CD4-positive, alpha-beta memory T cell (primary cell): ENCODE measurements at regions of chr2 and their contacts with region 1.

Region 1: GRCh38 chr2:240560480-240561326 is 546 bp downstream of the DUSP28 start:
- DNase-seq: peak; percentile 99 to 100 (median 99)
- H3K4me3 ChIP-seq: peak overlapping the region; percentile 54 to 90
- H3K4me3 Mint-ChIP-seq: peak overlapping the region; percentile 84 to 91 (median 88)
- H3K27ac ChIP-seq: peak overlapping the region; percentile 86
- H3K27ac Mint-ChIP-seq: peak overlapping the region; percentile 86 to 99 (median 94)
- H3K4me1 ChIP-seq: peaks cover 85% of the 10 kb centered on the region
- H3K4me1 Mint-ChIP-seq: peaks cover 47 to 84% (median 67%) of the 10 kb centered on the region in 4 donors
- H3K27me3 ChIP-seq: no peaks in the 10 kb centered on the region
- H3K27me3 Mint-ChIP-seq: no peaks in the 10 kb centered on the region

Region 2: GRCh38 chr2:240021488-240022104 is 539.1 kb before region 1 on chr2:
- CTCF ChIA-PET with region 1: no interaction called
- POLR2A ChIA-PET with region 1: no interaction called
- intact Hi-C with region 1: loop called (anchors 5 kb)
- DNase-seq: peak; percentile 42 to 73 (median 51)
- H3K4me3 ChIP-seq: no peak overlapping the region
- H3K4me3 Mint-ChIP-seq: no peak overlapping the region
- H3K27ac ChIP-seq: no peak overlapping the region
- H3K27ac Mint-ChIP-seq: peak overlapping the region in 2 of 7 donors; percentile 41 to 65
- H3K4me1 ChIP-seq: peaks cover 20% of the 10 kb centered on the region
- H3K4me1 Mint-ChIP-seq: peaks cover 15 to 34% (median 20%) of the 10 kb centered on the region in 4 donors
- H3K27me3 ChIP-seq: no peaks in the 10 kb centered on the region
- H3K27me3 Mint-ChIP-seq: peaks cover 0 to 2% of the 10 kb centered on the region in 2 donors

Region 3: DNA sequence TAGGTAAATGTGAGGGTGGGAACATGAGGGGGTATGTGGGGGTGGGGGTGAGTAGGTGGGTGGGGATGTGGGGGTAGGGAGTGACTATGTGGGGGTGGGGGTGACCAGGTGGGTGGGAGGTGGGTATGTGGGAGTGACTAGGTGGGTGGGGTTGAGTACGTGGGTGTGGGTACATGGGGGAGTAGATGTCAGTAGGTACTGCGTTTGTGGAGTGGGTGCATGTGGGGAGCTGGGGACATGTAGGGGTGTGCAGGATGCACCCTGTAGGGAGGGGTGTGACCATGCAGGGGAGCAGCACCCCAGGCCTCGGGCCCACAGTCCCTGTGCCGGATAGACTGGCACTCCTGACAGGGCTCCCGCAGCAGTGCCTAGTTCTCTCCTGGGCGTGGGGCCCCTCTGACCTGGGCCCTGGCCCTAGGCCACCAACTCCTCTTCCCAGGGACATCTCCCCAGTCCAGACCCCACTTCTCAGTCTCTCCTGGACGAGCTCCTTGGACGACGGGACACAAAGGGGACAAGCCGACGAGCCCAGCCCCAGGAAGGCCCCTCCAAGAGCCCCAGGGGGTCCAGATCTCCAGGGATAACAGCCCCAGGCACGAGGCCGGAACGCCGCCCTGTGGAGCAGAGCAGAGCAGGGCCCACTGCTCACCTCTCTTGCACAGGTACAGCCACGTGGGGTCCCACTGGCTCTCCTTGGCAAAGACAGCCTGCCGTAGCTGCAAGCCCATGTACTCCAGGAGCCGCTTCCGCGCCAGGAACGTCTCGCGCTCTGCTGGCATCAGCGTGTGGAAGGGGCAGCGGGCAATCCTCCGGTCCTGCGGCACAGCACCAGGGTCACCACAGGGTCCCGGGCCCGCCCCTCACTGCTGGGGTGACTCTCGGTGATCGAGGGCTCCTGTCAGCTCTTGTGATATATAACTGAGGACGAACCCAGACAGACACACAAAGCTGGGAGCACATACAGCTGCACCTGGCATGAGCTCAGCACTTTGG is 61.1 kb before region 1 on chr2:
- CTCF ChIA-PET with region 1: no interaction called
- POLR2A ChIA-PET with region 1: no interaction called
- intact Hi-C with region 1: no loop called
- DNase-seq: no peak
- H3K4me3 ChIP-seq: no peak overlapping the region
- H3K4me3 Mint-ChIP-seq: no peak overlapping the region
- H3K27ac ChIP-seq: no peak overlapping the region
- H3K27ac Mint-ChIP-seq: no peak overlapping the region
- H3K4me1 ChIP-seq: no peaks in the 10 kb centered on the region
- H3K4me1 Mint-ChIP-seq: peaks cover 0 to 2% (median 0%) of the 10 kb centered on the region in 4 donors
- H3K27me3 ChIP-seq: no peaks in the 10 kb centered on the region
- H3K27me3 Mint-ChIP-seq: no peaks in the 10 kb centered on the region

Region 4: GRCh38 chr2:240579771-240580614 is 19.3 kb after region 1 on chr2:
- CTCF ChIA-PET with region 1: interaction called, 61 read pairs
- POLR2A ChIA-PET with region 1: interaction called, 461 read pairs
- intact Hi-C with region 1: no loop called
- DNase-seq: peak; percentile 83 to 89 (median 85)
- H3K4me3 ChIP-seq: peak overlapping the region in 1 of 2 donors; percentile 8
- H3K4me3 Mint-ChIP-seq: peak overlapping the region; percentile 5 to 70 (median 47)
- H3K27ac ChIP-seq: peak overlapping the region; percentile 30
- H3K27ac Mint-ChIP-seq: peak overlapping the region; percentile 74 to 93 (median 88)
- H3K4me1 ChIP-seq: peaks cover 34% of the 10 kb centered on the region
- H3K4me1 Mint-ChIP-seq: peaks cover 19 to 50% (median 36%) of the 10 kb centered on the region in 4 donors
- H3K27me3 ChIP-seq: no peaks in the 10 kb centered on the region
- H3K27me3 Mint-ChIP-seq: no peaks in the 10 kb centered on the region

Region 5: GRCh38 chr2:240586198-240586918 is 25.7 kb after region 1 on chr2 and contains the start of gene CAPN10:
- CTCF ChIA-PET with region 1: interaction called, 61 read pairs
- POLR2A ChIA-PET with region 1: interaction called, 461 read pairs
- intact Hi-C with region 1: loop called (anchors 1 kb)
- DNase-seq: peak; percentile 96 to 98 (median 97)
- H3K4me3 ChIP-seq: peak within 1 kb of the TSS; percentile 63 to 99
- H3K4me3 Mint-ChIP-seq: peak within 1 kb of the TSS; percentile 93 to 98 (median 96)
- H3K27ac ChIP-seq: peak within 1 kb of the TSS; percentile 80
- H3K27ac Mint-ChIP-seq: peak within 1 kb of the TSS; percentile 95 to 98 (median 96)
- H3K4me1 ChIP-seq: peaks cover 38% of the 10 kb centered on the region
- H3K4me1 Mint-ChIP-seq: peaks cover 25 to 63% (median 44%) of the 10 kb centered on the region in 4 donors
- H3K27me3 ChIP-seq: no peaks in the 10 kb centered on the region
- H3K27me3 Mint-ChIP-seq: no peaks in the 10 kb centered on the region
- total RNA-seq, gene CAPN10: 80.6 to 83.0 TPM

Region 6: DNA sequence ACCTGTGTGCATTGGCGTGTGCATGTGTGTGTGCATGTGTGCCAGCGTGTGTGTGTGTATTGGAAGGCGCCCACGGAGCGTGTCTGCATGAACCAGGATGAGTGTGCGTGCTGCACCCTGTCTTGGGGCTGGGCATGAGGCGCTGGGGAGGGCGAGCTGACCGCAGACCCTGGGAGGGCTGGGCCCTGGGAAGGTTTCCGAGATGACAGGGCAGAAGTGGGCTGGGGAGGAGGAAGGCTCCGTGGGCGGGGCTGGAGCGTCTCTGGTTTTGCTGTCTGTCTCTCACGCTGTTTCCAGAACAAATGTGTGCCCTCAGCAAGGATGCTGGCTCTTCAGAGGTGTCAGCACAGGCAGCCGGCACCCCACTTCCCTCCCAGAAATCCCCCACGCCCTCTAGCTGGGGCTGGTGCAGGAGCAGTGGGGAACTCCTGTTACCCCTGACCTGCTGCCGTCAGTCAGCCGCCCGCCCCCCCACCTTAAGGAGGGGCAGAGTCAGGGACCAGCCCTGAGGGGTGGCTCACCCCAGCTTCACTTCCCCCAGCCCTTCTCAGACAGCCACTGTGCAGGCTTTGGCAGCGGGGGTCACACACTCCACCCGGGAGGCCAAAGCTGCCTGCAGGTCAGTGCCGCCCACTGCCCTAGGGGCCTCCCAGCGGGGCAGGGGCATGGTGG is 64.4 kb after region 1 on chr2 and contains the start of gene GPR35:
- CTCF ChIA-PET with region 1: interaction called, 4 read pairs
- POLR2A ChIA-PET with region 1: interaction called, 34 read pairs
- intact Hi-C with region 1: no loop called
- DNase-seq: peak; percentile 74 to 96 (median 80)
- H3K4me3 ChIP-seq: no peak within 1 kb of the TSS
- H3K4me3 Mint-ChIP-seq: peak within 1 kb of the TSS; percentile 61 to 79 (median 68)
- H3K27ac ChIP-seq: peak within 1 kb of the TSS; percentile 81
- H3K27ac Mint-ChIP-seq: peak within 1 kb of the TSS; percentile 90 to 96 (median 95)
- H3K4me1 ChIP-seq: peaks cover 88% of the 10 kb centered on the region
- H3K4me1 Mint-ChIP-seq: peaks cover 34 to 70% (median 44%) of the 10 kb centered on the region in 4 donors
- H3K27me3 ChIP-seq: no peaks in the 10 kb centered on the region
- H3K27me3 Mint-ChIP-seq: no peaks in the 10 kb centered on the region
- total RNA-seq, gene GPR35: 6.3 to 6.8 TPM

Region 7: GRCh38 chr2:240832205-240832727 is 271.6 kb after region 1 on chr2:
- CTCF ChIA-PET with region 1: no interaction called
- POLR2A ChIA-PET with region 1: interaction called, 7 read pairs
- intact Hi-C with region 1: loop called (anchors 1 kb)
- DNase-seq: peak; percentile 98 to 99 (median 99)
- H3K4me3 ChIP-seq: peak overlapping the region; percentile 34 to 36
- H3K4me3 Mint-ChIP-seq: peak overlapping the region in 6 of 8 donors; percentile 12 to 81 (median 66)
- H3K27ac ChIP-seq: no peak overlapping the region
- H3K27ac Mint-ChIP-seq: peak overlapping the region in 3 of 7 donors; percentile 55 to 91 (median 82)
- H3K4me1 ChIP-seq: peaks cover 12% of the 10 kb centered on the region
- H3K4me1 Mint-ChIP-seq: peaks cover 0 to 6% (median 3%) of the 10 kb centered on the region in 4 donors
- H3K27me3 ChIP-seq: peaks cover 10% of the 10 kb centered on the region
- H3K27me3 Mint-ChIP-seq: peaks cover 8 to 16% of the 10 kb centered on the region in 2 donors

Region 8: GRCh38 chr2:241637000-241637791 is 1076.5 kb after region 1 on chr2 and contains the starts of genes ATG4B and THAP4:
- CTCF ChIA-PET with region 1: no interaction called
- POLR2A ChIA-PET with region 1: interaction called, 4 read pairs
- intact Hi-C with region 1: loop called (anchors 10 kb)
- DNase-seq: peak; percentile 73 to 89 (median 78)
- H3K4me3 ChIP-seq: peak within 1 kb of the TSS; percentile 65 to 90
- H3K4me3 Mint-ChIP-seq: peak within 1 kb of the TSS; percentile 86 to 98 (median 94)
- H3K27ac ChIP-seq: peak within 1 kb of the TSS; percentile 88
- H3K27ac Mint-ChIP-seq: peak within 1 kb of the TSS; percentile 82 to 98 (median 93)
- H3K4me1 ChIP-seq: peaks cover 35% of the 10 kb centered on the region
- H3K4me1 Mint-ChIP-seq: peaks cover 36 to 71% (median 48%) of the 10 kb centered on the region in 4 donors
- H3K27me3 ChIP-seq: no peaks in the 10 kb centered on the region
- H3K27me3 Mint-ChIP-seq: no peaks in the 10 kb centered on the region
- total RNA-seq, gene ATG4B: 87.7 to 96.9 TPM
- total RNA-seq, gene THAP4: 27.8 to 28.2 TPM